GM12878 (cell line): ENCODE measurements at regions of chr15 and their contacts with region 1.

Region 1: GRCh38 chr15:82139823-82140268 is 94.0 kb upstream of the MEX3B start:
- DNase-seq: no peak
- ATAC-seq: peak; percentile 70
- H3K4me3 ChIP-seq: no peak overlapping the region
- H3K27ac ChIP-seq: no peak overlapping the region
- H3K4me1 ChIP-seq: no peaks in the 10 kb centered on the region
- H3K27me3 ChIP-seq: no peaks in the 10 kb centered on the region
- CTCF ChIP-seq: peak; percentile 45 to 63 (median 53)
- EP300 ChIP-seq: no peak
- POLR2A ChIP-seq: no peak
- RAD21 ChIP-seq: peak; percentile 53

Region 2: DNA sequence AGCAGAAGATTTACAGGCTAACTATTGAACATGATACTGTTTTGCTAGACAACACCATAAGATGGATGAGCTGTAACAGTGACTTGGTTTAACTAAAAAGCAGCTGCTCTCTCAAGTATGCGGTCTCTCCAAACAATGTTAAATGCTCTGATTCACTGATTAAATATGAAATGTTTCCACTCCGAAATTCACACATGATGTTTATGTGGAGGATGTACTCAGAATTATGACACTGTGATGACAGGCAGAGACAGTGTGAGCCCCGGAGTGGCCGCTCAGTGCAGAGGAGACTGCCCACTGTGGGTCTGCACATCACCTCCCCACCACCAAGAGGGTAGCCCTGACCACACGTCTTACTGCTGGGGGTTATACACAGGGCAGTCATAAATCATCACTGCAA is 10.1 kb before region 1 on chr15:
- CTCF ChIA-PET with region 1: interaction called, 12 read pairs
- POLR2A ChIA-PET with region 1: no interaction called
- RAD21 ChIA-PET with region 1: no interaction called
- SMC1A ChIA-PET with region 1: interaction called, 3 read pairs
- in situ Hi-C with region 1: no loop called
- intact Hi-C with region 1: no loop called
- DNase-seq: no peak
- ATAC-seq: no peak
- H3K4me3 ChIP-seq: no peak overlapping the region
- H3K27ac ChIP-seq: no peak overlapping the region
- H3K4me1 ChIP-seq: peaks cover 7% of the 10 kb centered on the region; the same call in 1 of the 2 replicates
- H3K27me3 ChIP-seq: no peaks in the 10 kb centered on the region
- CTCF ChIP-seq: no peak
- EP300 ChIP-seq: no peak
- POLR2A ChIP-seq: no peak
- RAD21 ChIP-seq: no peak